Right cardiac atrium (tissue), 5 donors: ENCODE measurements at regions of chr22 and their contacts with region 1.

Region 1: DNA sequence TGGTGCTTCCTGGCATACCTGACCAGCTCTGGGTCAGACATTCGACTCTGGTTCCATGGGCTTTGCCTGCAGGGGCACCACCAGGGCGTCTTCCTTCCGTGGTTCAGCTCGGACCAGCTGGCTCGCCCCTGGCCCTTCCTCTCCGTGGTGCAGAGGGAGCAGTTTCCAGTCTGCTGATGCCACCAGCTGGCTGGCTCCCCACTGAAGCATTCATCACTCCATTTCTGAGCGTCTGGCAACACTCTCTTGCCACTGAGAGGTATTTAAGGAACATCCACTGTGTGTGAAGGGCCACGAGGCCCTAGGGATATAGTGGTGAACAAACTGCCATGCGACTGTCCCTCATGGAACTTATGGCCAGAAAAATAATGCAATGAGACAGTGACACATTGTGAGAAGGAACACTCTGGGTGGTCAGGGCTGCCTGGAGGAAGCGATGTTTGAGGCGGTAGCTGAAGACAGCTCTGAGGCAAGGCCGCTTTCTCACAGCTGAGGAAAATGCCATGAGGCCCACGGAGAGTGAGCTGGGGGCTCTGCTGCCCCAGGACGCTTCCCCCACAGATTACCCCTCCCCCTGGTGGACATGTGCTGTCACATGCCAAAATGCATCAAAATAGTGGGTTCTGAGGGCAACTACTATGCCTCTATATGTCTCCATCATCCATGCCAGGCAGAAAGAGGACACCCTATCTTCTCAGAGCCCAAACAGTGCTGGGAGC is 44.9 kb upstream of the ARFGAP3 start:
- DNase-seq: peak; percentile 64 to 80 (median 77)
- ATAC-seq: peak; percentile 52 to 61
- H3K4me3 ChIP-seq: no peak overlapping the region
- H3K27ac ChIP-seq: peak overlapping the region; percentile 87
- H3K4me1 ChIP-seq: peaks cover 20% of the 10 kb centered on the region
- H3K27me3 ChIP-seq: no peaks in the 10 kb centered on the region

Region 2: DNA sequence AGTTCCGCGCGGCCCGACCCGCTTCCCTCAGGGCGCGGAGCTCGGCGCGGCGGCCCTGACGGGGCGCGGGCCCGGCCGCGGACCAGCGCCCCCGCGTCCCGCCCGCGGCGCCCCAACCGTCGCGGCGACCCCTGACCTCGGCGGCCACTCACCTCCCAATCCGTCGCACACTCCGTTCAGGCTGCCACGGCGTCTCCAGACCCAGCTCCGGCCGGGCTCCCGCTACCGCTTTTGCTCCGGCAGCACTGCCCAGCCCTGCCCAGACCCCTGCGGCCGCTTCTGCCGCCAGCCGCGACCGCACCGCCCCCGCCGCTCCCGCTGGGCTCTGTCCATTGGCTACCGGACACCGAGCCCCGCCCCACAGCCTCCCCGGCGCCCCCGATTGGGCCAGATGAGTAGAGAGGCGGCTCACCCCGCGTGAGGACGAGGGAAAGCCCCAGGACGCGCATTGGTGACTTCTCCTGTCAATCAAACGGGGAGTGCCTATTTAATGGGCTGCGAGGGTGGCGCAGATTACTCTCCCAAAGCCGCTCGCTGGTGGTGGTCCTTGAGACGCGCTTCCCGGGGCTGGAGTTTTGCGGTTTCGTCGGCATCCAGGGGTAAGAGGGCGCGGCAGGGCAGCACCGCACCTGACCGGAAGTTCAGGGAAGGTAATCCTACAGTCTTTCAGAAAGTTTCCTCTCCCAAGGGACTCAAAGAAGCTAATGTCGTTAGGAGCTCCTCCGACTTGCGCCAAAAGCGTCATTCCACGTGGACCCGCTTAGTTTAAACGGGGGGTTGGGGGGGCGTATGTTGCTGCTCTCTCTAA is 113.1 kb after region 1 on chr22 and contains the start of gene PACSIN2:
- intact Hi-C with region 1: loop called in 1 of 4 experiments (anchors 10 kb)
- DNase-seq: peak; percentile 100
- ATAC-seq: peak; percentile 100
- H3K4me3 ChIP-seq: peak within 1 kb of the TSS; percentile 85
- H3K27ac ChIP-seq: peak within 1 kb of the TSS; percentile 76
- H3K4me1 ChIP-seq: peaks cover 6% of the 10 kb centered on the region
- H3K27me3 ChIP-seq: no peaks in the 10 kb centered on the region
- total RNA-seq, gene PACSIN2: 66.7 to 85.6 (median 69.8) TPM

Region 3: GRCh38 chr22:43399338-43399979 is 497.5 kb after region 1 on chr22:
- intact Hi-C with region 1: no loop called
- DNase-seq: no peak
- ATAC-seq: no peak
- H3K4me3 ChIP-seq: no peak overlapping the region
- H3K27ac ChIP-seq: no peak overlapping the region
- H3K4me1 ChIP-seq: no peaks in the 10 kb centered on the region
- H3K27me3 ChIP-seq: no peaks in the 10 kb centered on the region